ENCODE measurements at regions of chr2 and their contacts with region 1.

Region 1: DNA sequence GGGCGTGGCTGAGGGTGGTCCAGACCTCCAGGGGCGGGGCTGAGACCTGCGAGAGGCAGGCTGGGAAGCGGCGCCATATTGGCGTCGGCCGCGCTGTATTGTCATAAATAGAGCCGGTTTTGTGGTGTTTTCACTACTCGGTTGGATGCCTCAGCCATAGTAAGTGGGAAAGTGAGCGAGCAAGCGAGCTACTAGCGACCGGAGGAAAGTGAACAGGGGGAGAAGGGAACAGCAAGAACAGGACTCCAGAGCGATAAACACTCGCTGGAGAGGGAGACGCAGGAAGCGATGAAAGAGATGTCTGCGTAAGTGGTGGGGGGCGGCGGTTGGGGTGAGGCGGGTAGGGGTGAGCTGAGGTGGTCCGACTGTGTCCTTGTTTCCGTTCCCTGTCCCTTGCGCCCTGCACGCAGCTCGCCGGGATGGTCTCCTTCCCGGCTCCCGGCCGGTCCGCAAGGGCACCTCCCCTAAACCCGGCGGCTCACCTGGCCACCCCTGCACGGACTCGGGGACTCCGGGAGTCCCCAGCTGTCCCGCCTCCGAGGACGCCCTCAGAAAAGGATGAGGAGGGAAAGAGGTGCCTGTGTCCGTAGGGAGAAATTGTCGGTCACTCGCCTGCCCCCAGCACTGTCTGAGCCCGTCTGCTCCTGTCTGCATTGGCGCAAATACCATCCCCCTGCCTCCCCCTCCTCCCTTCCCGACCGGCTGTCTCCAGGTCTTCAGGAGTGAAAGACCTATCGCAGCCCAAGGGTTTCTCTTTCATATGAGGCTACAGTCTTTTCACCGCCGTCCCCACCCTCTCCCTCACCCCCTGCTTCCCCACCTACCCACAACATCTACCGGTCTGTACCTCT is at the start of gene PAPOLG:
- DNase-seq: peak; percentile 98
- ATAC-seq: peak; percentile 99
- H3K4me3 Mint-ChIP-seq: peak within 1 kb of the TSS; percentile 100
- H3K27ac Mint-ChIP-seq: peak within 1 kb of the TSS; percentile 100
- H3K4me1 Mint-ChIP-seq: peaks cover 23% of the 10 kb centered on the region
- H3K27me3 Mint-ChIP-seq: no peaks in the 10 kb centered on the region
- total RNA-seq, gene PAPOLG: 17.3 to 19.5 TPM

Region 2: DNA sequence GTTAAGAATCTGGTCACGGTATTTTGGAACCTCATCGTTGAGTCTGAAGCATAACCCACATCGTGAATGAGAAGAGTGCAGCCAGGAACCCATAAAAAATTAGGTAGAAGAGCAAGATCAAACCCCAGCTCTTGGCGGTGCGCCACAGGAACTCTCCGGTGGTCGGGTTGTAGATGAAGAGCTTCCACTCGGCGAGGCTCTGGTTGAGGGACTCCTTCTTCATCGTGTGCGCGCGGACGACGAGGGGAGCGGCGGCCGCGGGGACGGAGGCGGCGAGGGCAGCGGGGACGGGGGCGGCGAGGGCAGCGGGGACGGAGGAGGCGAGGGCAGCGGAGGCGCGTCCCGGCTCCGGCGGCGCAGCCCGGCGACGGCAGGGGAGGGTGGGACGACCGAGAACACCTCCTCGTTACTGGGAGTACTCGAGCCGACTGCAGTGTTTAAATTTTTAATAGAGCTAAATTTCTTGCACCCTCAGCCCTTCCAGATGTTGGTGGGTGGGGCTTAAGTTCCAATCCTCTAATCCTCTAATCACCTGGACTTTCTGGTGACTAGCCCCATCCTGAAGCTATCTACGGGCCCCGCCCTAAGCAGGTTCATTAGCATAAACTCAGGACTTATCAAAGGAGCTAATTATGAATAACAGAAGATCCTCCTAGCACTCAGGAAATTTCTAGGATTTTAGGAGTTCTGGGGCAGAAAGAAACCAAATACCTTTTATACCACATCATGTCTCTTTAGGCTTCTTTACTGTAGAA is 20.7 kb before region 1 on chr2:
- CTCF ChIA-PET with region 1: no interaction called
- POLR2A ChIA-PET with region 1: no interaction called
- DNase-seq: peak; percentile 72
- ATAC-seq: peak; percentile 85
- H3K4me3 Mint-ChIP-seq: peak overlapping the region; percentile 80
- H3K27ac Mint-ChIP-seq: peak overlapping the region; percentile 11
- H3K4me1 Mint-ChIP-seq: peaks cover 13% of the 10 kb centered on the region
- H3K27me3 Mint-ChIP-seq: peaks cover 24% of the 10 kb centered on the region

Region 3: DNA sequence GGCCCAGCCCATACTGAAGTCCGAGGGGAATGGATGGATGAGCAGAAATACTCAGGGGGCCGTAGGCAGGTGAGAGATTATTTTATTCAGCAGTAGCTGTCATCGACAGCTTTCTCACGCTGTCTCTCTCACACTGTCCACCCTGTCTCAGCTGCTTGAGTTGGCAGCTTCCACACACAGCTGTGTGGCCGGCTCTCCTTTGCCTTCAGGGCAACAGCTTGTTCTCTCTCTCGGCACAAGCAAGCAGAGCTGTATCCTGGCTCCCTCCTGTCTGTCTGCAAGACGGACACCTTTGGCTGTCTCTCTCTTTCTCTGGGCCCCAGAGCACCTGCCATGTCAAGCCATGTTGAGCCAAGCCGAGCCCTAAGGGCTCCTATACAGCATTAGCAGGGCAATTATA is 10.1 kb before region 1 on chr2:
- CTCF ChIA-PET with region 1: interaction called, 7 read pairs
- POLR2A ChIA-PET with region 1: interaction called, 11 read pairs
- DNase-seq: no peak
- ATAC-seq: no peak
- H3K4me3 Mint-ChIP-seq: peak overlapping the region; percentile 35
- H3K27ac Mint-ChIP-seq: peak overlapping the region; percentile 71
- H3K4me1 Mint-ChIP-seq: peaks cover 34% of the 10 kb centered on the region
- H3K27me3 Mint-ChIP-seq: peaks cover 8% of the 10 kb centered on the region

Region 4: GRCh38 chr2:60899230-60899891 is 142.9 kb after region 1 on chr2:
- CTCF ChIA-PET with region 1: no interaction called
- POLR2A ChIA-PET with region 1: no interaction called
- DNase-seq: no peak
- ATAC-seq: no peak
- H3K4me3 Mint-ChIP-seq: no peak overlapping the region
- H3K27ac Mint-ChIP-seq: no peak overlapping the region
- H3K4me1 Mint-ChIP-seq: peaks cover 5% of the 10 kb centered on the region
- H3K27me3 Mint-ChIP-seq: no peaks in the 10 kb centered on the region

Measured in activated CD8-positive, alpha-beta T cell treated with anti-CD3 and anti-CD28 coated beads, Interleukin-2, amount 10 ng/mL, durations not matched to agents 7 days and 5 days (primary cell).